Body of pancreas (tissue), 4 donors: ENCODE measurements at regions of chr19 and their contacts with region 1.

Region 1: GRCh38 chr19:2663920-2664571 is 38.4 kb downstream of the GNG7 start:
- DNase-seq: peak in 3 of 4 donors; percentile 20 to 35 (median 32)
- ATAC-seq: no peak
- H3K4me3 ChIP-seq: no peak overlapping the region
- H3K27ac ChIP-seq: no peak overlapping the region
- H3K4me1 ChIP-seq: no peaks in the 10 kb centered on the region
- H3K27me3 ChIP-seq: no peaks in the 10 kb centered on the region
- CTCF ChIP-seq: no peak
- POLR2A ChIP-seq: no peak

Region 2: GRCh38 chr19:3146677-3147100 is 482.6 kb after region 1 on chr19:
- intact Hi-C with region 1: loop called (anchors 10 kb)
- DNase-seq: no peak
- ATAC-seq: no peak
- H3K4me3 ChIP-seq: no peak overlapping the region
- H3K27ac ChIP-seq: no peak overlapping the region
- H3K4me1 ChIP-seq: no peaks in the 10 kb centered on the region
- H3K27me3 ChIP-seq: peaks cover 0 to 4% of the 10 kb centered on the region in 2 donors
- CTCF ChIP-seq: peak in 6 of 7 experiments; percentile 27 to 51 (median 38)
- POLR2A ChIP-seq: no peak